ENCODE measurements at regions of chr6 and their contacts with region 1.

Region 1: GRCh38 chr6:146041282-146041681 is 12.4 kb downstream of the GRM1 start:
- DNase-seq: peak; percentile 33
- ATAC-seq: peak; percentile 96
- H3K4me3 ChIP-seq: no peak overlapping the region
- H3K27ac ChIP-seq: no peak overlapping the region
- H3K4me1 ChIP-seq: no peaks in the 10 kb centered on the region
- H3K27me3 ChIP-seq: no peaks in the 10 kb centered on the region
- CTCF ChIP-seq: peak; percentile 73
- EP300 ChIP-seq: no peak
- POLR2A ChIP-seq: no peak
- RAD21 ChIP-seq: peak; percentile 42; the same call in 1 of the 2 replicates

Region 2: GRCh38 chr6:145656128-145656527 is 385.2 kb before region 1 on chr6:
- CTCF ChIA-PET with region 1: no interaction called
- POLR2A ChIA-PET with region 1: no interaction called
- in situ Hi-C with region 1: no loop called
- intact Hi-C with region 1: no loop called
- DNase-seq: no peak
- ATAC-seq: no peak
- H3K4me3 ChIP-seq: no peak overlapping the region
- H3K27ac ChIP-seq: no peak overlapping the region
- H3K4me1 ChIP-seq: no peaks in the 10 kb centered on the region
- H3K27me3 ChIP-seq: no peaks in the 10 kb centered on the region
- CTCF ChIP-seq: no peak
- EP300 ChIP-seq: no peak
- POLR2A ChIP-seq: no peak
- RAD21 ChIP-seq: no peak

Region 3: DNA sequence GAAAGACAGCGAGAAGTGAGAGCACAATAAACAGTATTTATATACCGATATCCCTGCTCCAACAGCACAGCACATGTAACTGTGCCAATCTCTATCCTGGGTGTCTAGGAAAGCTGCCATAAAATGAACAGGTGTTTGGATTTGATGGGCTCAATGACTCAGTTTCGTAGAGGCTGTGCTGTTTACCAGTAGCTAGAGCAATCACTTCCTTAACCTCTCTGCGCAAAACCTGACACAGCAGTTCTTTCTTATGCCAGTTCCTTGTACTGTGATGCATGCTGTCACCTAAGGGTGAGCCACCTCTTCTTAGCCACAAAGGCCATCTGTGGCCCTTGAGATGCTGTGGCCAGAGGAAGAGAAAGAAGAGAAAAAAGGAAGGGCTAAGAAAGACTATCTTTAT is 136.4 kb before region 1 on chr6:
- CTCF ChIA-PET with region 1: no interaction called
- POLR2A ChIA-PET with region 1: no interaction called
- in situ Hi-C with region 1: no loop called
- intact Hi-C with region 1: no loop called
- DNase-seq: no peak
- ATAC-seq: no peak
- H3K4me3 ChIP-seq: no peak overlapping the region
- H3K27ac ChIP-seq: no peak overlapping the region
- H3K4me1 ChIP-seq: peaks cover 7% of the 10 kb centered on the region
- H3K27me3 ChIP-seq: no peaks in the 10 kb centered on the region
- CTCF ChIP-seq: no peak
- EP300 ChIP-seq: no peak
- POLR2A ChIP-seq: no peak
- RAD21 ChIP-seq: no peak

Region 4: DNA sequence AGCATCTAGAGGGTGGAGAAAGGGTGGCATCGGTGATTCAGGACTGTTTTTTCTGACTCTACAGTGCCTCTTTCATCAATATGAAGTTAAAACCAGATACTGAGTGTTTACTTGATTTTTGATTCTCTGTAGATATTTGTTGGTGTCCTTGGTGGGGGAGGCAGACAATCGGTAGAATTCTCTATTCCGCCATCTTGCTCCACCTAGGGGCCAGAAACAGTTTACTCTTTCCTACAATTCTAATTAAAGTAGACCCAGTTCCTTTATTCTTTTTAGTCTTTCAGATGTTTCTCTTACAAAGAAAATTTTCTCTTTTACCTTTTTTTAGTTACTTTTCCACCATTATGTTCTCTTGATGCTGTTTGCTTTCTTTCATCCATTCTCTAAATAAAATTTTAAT is 340.2 kb after region 1 on chr6:
- CTCF ChIA-PET with region 1: no interaction called
- POLR2A ChIA-PET with region 1: no interaction called
- in situ Hi-C with region 1: no loop called
- intact Hi-C with region 1: loop called (anchors 5 kb)
- DNase-seq: no peak
- ATAC-seq: peak; percentile 39; the same call in 1 of the 3 replicates
- H3K4me3 ChIP-seq: no peak overlapping the region
- H3K27ac ChIP-seq: no peak overlapping the region
- H3K4me1 ChIP-seq: no peaks in the 10 kb centered on the region
- H3K27me3 ChIP-seq: no peaks in the 10 kb centered on the region
- CTCF ChIP-seq: no peak
- EP300 ChIP-seq: no peak
- POLR2A ChIP-seq: no peak
- RAD21 ChIP-seq: no peak

Region 5: DNA sequence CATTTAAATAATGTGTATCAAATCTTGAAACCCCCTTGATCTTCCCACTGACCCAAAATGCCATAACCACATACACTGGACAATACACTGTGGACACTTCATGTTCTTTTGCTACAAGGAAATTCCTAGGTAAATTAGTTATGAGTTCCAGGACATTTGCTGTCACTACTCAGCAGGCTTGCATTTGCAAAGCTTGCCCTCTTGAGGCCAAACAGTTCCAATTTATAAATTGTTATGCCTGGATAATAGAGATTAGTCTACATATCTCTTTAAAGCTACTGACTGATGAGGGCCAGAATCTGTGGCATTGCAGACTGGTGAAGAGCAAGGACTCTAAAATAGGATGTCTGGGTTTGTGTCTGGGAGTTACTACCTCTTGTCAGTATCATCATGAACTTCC is 484.9 kb after region 1 on chr6:
- CTCF ChIA-PET with region 1: no interaction called
- POLR2A ChIA-PET with region 1: no interaction called
- in situ Hi-C with region 1: no loop called
- intact Hi-C with region 1: loop called (anchors 2 kb)
- DNase-seq: no peak
- ATAC-seq: no peak; the same call in 2 of the 3 replicates
- H3K4me3 ChIP-seq: no peak overlapping the region
- H3K27ac ChIP-seq: no peak overlapping the region
- H3K4me1 ChIP-seq: no peaks in the 10 kb centered on the region
- H3K27me3 ChIP-seq: no peaks in the 10 kb centered on the region
- CTCF ChIP-seq: no peak
- EP300 ChIP-seq: no peak
- POLR2A ChIP-seq: no peak
- RAD21 ChIP-seq: no peak

Region 6: GRCh38 chr6:146664871-146665351 is 623.6 kb after region 1 on chr6:
- CTCF ChIA-PET with region 1: no interaction called
- POLR2A ChIA-PET with region 1: no interaction called
- in situ Hi-C with region 1: no loop called
- intact Hi-C with region 1: no loop called
- DNase-seq: no peak
- ATAC-seq: no peak
- H3K4me3 ChIP-seq: no peak overlapping the region
- H3K27ac ChIP-seq: no peak overlapping the region
- H3K4me1 ChIP-seq: no peaks in the 10 kb centered on the region
- H3K27me3 ChIP-seq: no peaks in the 10 kb centered on the region
- CTCF ChIP-seq: no peak
- EP300 ChIP-seq: no peak
- POLR2A ChIP-seq: no peak
- RAD21 ChIP-seq: no peak

Region 7: GRCh38 chr6:146700078-146700686 is 658.9 kb after region 1 on chr6:
- CTCF ChIA-PET with region 1: no interaction called
- POLR2A ChIA-PET with region 1: no interaction called
- in situ Hi-C with region 1: no loop called
- intact Hi-C with region 1: loop called (anchors 1 kb)
- DNase-seq: peak; percentile 84
- ATAC-seq: peak; percentile 87
- H3K4me3 ChIP-seq: no peak overlapping the region
- H3K27ac ChIP-seq: no peak overlapping the region
- H3K4me1 ChIP-seq: no peaks in the 10 kb centered on the region
- H3K27me3 ChIP-seq: no peaks in the 10 kb centered on the region
- CTCF ChIP-seq: peak; percentile 89
- EP300 ChIP-seq: no peak
- POLR2A ChIP-seq: no peak
- RAD21 ChIP-seq: peak; percentile 75

Measured in HepG2 (cell line).